ENCODE measurements at regions of chr10 and their contacts with region 1.

Region 1: GRCh38 chr10:9596368-9596920 is 1421.2 kb upstream of the CELF2 start:
- DNase-seq: no peak
- H3K4me3 ChIP-seq: no peak overlapping the region
- H3K27ac ChIP-seq: no peak overlapping the region
- H3K4me1 ChIP-seq: no peaks in the 10 kb centered on the region
- CTCF ChIP-seq: no peak

Region 2: GRCh38 chr10:10096296-10096695 is 499.9 kb after region 1 on chr10:
- CTCF ChIA-PET with region 1: no interaction called
- POLR2A ChIA-PET with region 1: interaction called, 12 read pairs
- intact Hi-C with region 1: no loop called
- DNase-seq: no peak
- H3K4me3 ChIP-seq: no peak overlapping the region
- H3K27ac ChIP-seq: no peak overlapping the region
- H3K4me1 ChIP-seq: no peaks in the 10 kb centered on the region
- CTCF ChIP-seq: no peak